Left colon (tissue), 2 donors: ENCODE measurements at regions of chr6 and their contacts with region 1.

Region 1: DNA sequence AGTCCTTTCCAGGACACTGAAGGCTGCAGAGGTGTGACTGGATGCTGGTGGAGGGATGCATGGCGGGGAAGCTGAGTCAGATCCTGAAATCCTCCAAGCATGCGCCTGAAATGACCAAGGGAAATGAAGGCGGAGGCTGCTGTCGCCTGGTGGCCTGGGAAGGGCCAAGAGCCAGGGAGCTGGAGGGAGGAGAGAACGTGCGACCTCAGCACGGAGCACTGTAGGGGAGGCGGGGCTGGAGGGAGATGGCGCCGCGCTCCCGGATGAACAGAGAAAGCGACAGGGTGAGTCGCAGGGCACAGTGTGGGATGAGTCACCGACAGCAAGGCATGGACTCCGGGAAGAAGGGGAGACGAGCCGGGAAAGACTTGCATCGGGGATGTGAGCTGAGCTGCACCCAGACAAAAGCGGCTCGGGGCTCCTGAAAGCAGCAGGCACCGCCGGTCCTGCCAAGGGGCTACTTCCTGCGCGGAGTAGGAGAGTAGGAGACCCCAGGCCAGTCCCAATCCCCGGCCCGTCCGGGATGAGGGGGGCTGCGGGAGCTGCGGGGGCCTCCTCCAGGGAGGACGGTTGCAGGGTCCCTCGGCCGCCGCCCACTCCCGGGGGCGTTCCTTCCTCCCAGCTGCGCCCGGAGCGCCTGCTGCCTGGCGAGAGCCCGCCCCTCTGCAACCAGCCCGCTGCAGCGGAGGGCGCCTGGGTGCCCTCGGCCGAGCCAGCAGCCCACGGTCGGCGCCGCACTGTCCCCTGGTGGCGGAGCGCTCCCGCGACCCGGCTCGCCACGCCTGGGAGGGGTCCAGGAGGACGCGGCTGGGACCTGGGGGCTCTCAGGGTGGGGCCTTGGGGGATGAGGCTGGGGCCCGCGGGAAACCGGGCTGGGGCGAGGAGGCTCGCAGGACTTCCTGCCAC is 11.0 kb upstream of the NQO2 start:
- DNase-seq: peak; percentile 89 to 93
- ATAC-seq: peak; percentile 69

Region 2: DNA sequence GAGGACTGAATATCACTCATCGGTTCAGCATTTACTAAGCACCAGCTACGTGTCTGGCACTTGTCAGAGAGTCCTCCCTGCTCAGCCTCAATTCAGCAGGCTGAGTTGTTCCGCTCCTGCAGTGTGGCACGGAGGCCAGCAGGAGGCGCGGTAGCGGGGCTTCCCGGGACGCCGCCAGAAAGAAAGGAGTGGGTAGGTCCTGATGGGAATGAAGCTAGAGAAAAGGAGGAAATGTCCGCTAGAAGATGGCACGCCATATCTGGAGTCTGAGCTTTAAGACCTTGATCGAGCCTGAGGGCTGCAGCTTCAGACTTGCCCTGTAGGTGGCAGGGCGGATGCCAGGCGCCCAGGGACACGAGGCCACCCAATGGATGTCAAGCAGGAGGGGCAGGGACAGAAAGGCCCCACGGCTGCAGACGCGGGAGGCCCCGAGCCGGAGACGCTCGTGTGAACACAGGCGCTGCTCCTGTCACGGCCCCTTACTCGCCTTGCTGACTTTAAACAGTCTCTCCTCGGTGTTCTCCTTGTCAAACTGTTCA is 36.1 kb before region 1 on chr6:
- intact Hi-C with region 1: loop called in 1 of 2 experiments (anchors 5 kb)
- DNase-seq: peak; percentile 84 to 86
- ATAC-seq: peak; percentile 97